ENCODE measurements at regions of chr6 and their contacts with region 1.

Region 1: DNA sequence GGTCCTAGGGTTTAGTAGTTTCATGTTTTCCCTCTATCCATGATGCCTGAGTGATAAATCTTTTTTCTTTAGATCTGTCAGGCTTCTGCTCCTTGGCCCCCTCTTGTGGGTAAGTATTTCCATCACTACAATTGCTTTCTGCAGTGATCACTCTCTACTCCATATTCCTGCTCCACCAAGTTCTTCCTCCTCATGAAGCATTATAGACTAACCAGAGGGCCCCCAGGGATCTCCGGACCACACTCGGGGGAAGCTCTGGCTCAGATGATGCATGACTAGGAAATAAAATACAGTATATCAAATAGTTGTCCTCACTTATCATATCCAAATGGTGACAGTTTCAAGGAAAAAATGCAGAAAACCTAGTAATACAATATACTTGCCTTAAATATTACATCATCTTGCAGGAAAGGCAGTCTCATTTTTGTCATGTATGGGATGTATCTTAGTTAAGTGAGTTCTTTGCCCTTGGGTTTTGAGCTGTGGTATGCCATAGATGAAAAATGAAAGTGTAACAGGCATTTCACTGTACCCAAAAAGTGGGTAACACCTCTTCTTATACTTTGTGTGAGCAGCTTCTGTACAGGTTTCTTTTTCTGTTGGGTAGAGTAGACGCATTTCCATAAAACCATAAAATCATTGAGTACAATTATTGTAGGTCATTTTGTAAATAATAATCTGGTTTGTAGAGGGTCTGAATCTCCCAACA is 200.9 kb upstream of the EYA4 start:
- DNase-seq: peak in 2 of 4 experiments; percentile 8 to 20
- ATAC-seq: peak; percentile 75
- H3K4me3 ChIP-seq: no peak overlapping the region
- H3K27ac ChIP-seq: no peak overlapping the region
- H3K4me1 ChIP-seq: no peaks in the 10 kb centered on the region
- H3K27me3 ChIP-seq: no peaks in the 10 kb centered on the region
- CTCF ChIP-seq: peak; percentile 21 to 43 (median 38); a peak in 3 of 6 replicates
- EP300 ChIP-seq: no peak
- POLR2A ChIP-seq: no peak
- RAD21 ChIP-seq: peak; percentile 13 to 38; a peak in 2 of 4 replicates

Region 2: GRCh38 chr6:132962936-132963868 is 77.0 kb before region 1 on chr6:
- CTCF ChIA-PET with region 1: interaction called, 4 read pairs
- POLR2A ChIA-PET with region 1: no interaction called
- in situ Hi-C with region 1: no loop called
- intact Hi-C with region 1: loop called (anchors 2 kb)
- DNase-seq: peak; percentile 58 to 77 (median 63)
- ATAC-seq: peak; percentile 95
- H3K4me3 ChIP-seq: no peak overlapping the region
- H3K27ac ChIP-seq: no peak overlapping the region
- H3K4me1 ChIP-seq: peaks cover 0 to 17% of the 10 kb centered on the region in 2 experiments; a peak in 3 of 5 replicates
- H3K27me3 ChIP-seq: no peaks in the 10 kb centered on the region
- CTCF ChIP-seq: peak; percentile 77 to 84 (median 80)
- EP300 ChIP-seq: no peak
- POLR2A ChIP-seq: no peak
- RAD21 ChIP-seq: peak; percentile 79 to 83

Region 3: DNA sequence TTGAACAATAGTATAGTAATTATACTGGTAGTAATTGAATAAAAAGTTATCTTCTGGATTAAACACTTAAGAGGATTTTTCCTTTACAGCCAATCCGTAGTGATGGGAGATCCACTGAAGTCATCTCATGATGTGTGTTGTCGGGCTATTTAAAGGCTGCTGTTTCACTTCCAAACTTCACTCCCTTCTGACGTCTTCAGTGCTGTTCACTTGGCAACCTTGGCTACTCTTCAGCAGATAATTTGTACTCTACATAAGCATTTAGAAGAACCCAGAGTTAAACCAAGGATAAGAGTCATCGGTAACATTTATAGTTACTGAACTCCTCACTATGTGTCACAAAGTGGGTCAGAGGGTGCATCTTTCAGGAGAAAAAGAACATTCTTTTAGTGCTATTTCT is 21.8 kb after region 1 on chr6:
- CTCF ChIA-PET with region 1: no interaction called
- POLR2A ChIA-PET with region 1: no interaction called
- in situ Hi-C with region 1: no loop called
- intact Hi-C with region 1: no loop called
- DNase-seq: no peak
- ATAC-seq: no peak
- H3K4me3 ChIP-seq: no peak overlapping the region
- H3K27ac ChIP-seq: no peak overlapping the region
- H3K4me1 ChIP-seq: no peaks in the 10 kb centered on the region
- H3K27me3 ChIP-seq: no peaks in the 10 kb centered on the region
- CTCF ChIP-seq: no peak
- EP300 ChIP-seq: no peak
- POLR2A ChIP-seq: no peak
- RAD21 ChIP-seq: no peak